ENCODE measurements at regions of chr6 and their contacts with region 1.

Region 1: GRCh38 chr6:24283043-24283985 is 74.5 kb downstream of the DCDC2 start:
- DNase-seq: peak; percentile 54
- ATAC-seq: peak; percentile 92
- H3K4me3 Mint-ChIP-seq: no peak overlapping the region
- H3K27ac Mint-ChIP-seq: no peak overlapping the region
- H3K4me1 Mint-ChIP-seq: peaks cover 6% of the 10 kb centered on the region
- H3K27me3 Mint-ChIP-seq: peaks cover 7% of the 10 kb centered on the region

Region 2: GRCh38 chr6:24228681-24229255 is 54.5 kb before region 1 on chr6:
- CTCF ChIA-PET with region 1: no interaction called
- POLR2A ChIA-PET with region 1: no interaction called
- DNase-seq: no peak
- ATAC-seq: no peak
- H3K4me3 Mint-ChIP-seq: no peak overlapping the region
- H3K27ac Mint-ChIP-seq: no peak overlapping the region
- H3K4me1 Mint-ChIP-seq: no peaks in the 10 kb centered on the region
- H3K27me3 Mint-ChIP-seq: peaks cover 5% of the 10 kb centered on the region

Region 3: GRCh38 chr6:24353861-24354260 is 70.5 kb after region 1 on chr6:
- CTCF ChIA-PET with region 1: interaction called, 11 read pairs
- POLR2A ChIA-PET with region 1: no interaction called
- DNase-seq: no peak
- ATAC-seq: no peak
- H3K4me3 Mint-ChIP-seq: no peak overlapping the region
- H3K27ac Mint-ChIP-seq: no peak overlapping the region
- H3K4me1 Mint-ChIP-seq: peaks cover 10% of the 10 kb centered on the region
- H3K27me3 Mint-ChIP-seq: peaks cover 50% of the 10 kb centered on the region

Region 4: GRCh38 chr6:24359640-24360454 is 76.5 kb after region 1 on chr6:
- CTCF ChIA-PET with region 1: interaction called, 11 read pairs
- POLR2A ChIA-PET with region 1: no interaction called
- DNase-seq: peak; percentile 87
- ATAC-seq: peak; percentile 91
- H3K4me3 Mint-ChIP-seq: peak overlapping the region; percentile 59
- H3K27ac Mint-ChIP-seq: no peak overlapping the region
- H3K4me1 Mint-ChIP-seq: peaks cover 21% of the 10 kb centered on the region
- H3K27me3 Mint-ChIP-seq: peaks cover 44% of the 10 kb centered on the region

Region 5: GRCh38 chr6:24401268-24401857 is 118.0 kb after region 1 on chr6:
- CTCF ChIA-PET with region 1: no interaction called
- POLR2A ChIA-PET with region 1: no interaction called
- DNase-seq: no peak
- ATAC-seq: no peak
- H3K4me3 Mint-ChIP-seq: no peak overlapping the region
- H3K27ac Mint-ChIP-seq: no peak overlapping the region
- H3K4me1 Mint-ChIP-seq: peaks cover 31% of the 10 kb centered on the region
- H3K27me3 Mint-ChIP-seq: peaks cover 28% of the 10 kb centered on the region

Measured in activated CD8-positive, alpha-beta T cell treated with anti-CD3 and anti-CD28 coated beads, Interleukin-2, amount 10 ng/mL, durations not matched to agents 7 days and 5 days (primary cell).